ENCODE measurements at regions of chr2 and their contacts with region 1.

Region 1: GRCh38 chr2:199663157-199663556 is 187.8 kb downstream of the FTCDNL1 start:
- DNase-seq: peak; percentile 49
- H3K4me3 ChIP-seq: no peak overlapping the region
- H3K4me3 Mint-ChIP-seq: no peak overlapping the region
- H3K27ac Mint-ChIP-seq: no peak overlapping the region
- H3K4me1 ChIP-seq: no peaks in the 10 kb centered on the region
- H3K4me1 Mint-ChIP-seq: no peaks in the 10 kb centered on the region
- H3K27me3 ChIP-seq: no peaks in the 10 kb centered on the region
- H3K27me3 Mint-ChIP-seq: no peaks in the 10 kb centered on the region
- CTCF ChIP-seq: no peak

Region 2: DNA sequence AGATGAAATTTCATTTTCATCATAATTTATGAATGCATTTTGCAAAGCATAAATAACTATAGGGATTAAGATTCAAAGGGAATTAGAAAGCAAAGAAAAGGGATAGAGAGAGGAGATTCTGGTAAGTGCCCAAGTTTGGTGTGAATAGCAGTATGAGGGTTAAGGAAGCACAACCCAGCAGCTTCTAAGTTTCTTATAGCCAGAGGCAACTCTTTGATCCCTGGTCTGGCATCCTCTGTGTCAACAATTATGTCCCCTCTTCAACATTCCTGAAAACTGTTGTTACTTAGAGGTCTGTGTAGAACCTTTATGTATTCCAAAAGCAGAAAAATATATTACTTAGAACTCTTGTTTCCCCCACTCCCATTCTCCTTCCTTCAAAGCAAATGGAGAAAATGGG is 33.9 kb before region 1 on chr2:
- CTCF ChIA-PET with region 1: no interaction called
- POLR2A ChIA-PET with region 1: no interaction called
- intact Hi-C with region 1: loop called (anchors 2 kb)
- DNase-seq: peak in 1 of 2 experiments; percentile 24
- H3K4me3 ChIP-seq: no peak overlapping the region
- H3K4me3 Mint-ChIP-seq: no peak overlapping the region
- H3K27ac Mint-ChIP-seq: peak overlapping the region; percentile 30
- H3K4me1 ChIP-seq: peaks cover 17% of the 10 kb centered on the region
- H3K4me1 Mint-ChIP-seq: peaks cover 25% of the 10 kb centered on the region
- H3K27me3 ChIP-seq: no peaks in the 10 kb centered on the region
- H3K27me3 Mint-ChIP-seq: no peaks in the 10 kb centered on the region
- CTCF ChIP-seq: no peak

Measured in Caco-2 (cell line).